ENCODE measurements at regions of chr17 and their contacts with region 1.

Region 1: GRCh38 chr17:27601069-27601975 is 29.7 kb upstream of the LGALS9 start:
- DNase-seq: peak; percentile 77 to 81
- ATAC-seq: peak; percentile 39 to 61; a peak in 4 of 6 replicates
- H3K4me3 ChIP-seq: no peak overlapping the region
- H3K27ac ChIP-seq: peak overlapping the region in 1 of 2 experiments; percentile 8; a peak in 1 of 6 replicates
- H3K4me1 ChIP-seq: peaks cover 25% of the 10 kb centered on the region
- CTCF ChIP-seq: peak; percentile 98
- EP300 ChIP-seq: no peak
- POLR2A ChIP-seq: no peak
- RAD21 ChIP-seq: peak; percentile 95 to 99

Region 2: GRCh38 chr17:27332485-27333409 is 268.6 kb before region 1 on chr17:
- CTCF ChIA-PET with region 1: interaction called, 51 read pairs
- POLR2A ChIA-PET with region 1: no interaction called
- DNase-seq: peak; percentile 97 to 99
- ATAC-seq: peak; percentile 94 to 98
- H3K4me3 ChIP-seq: peak overlapping the region; percentile 47
- H3K27ac ChIP-seq: peak overlapping the region; percentile 87 to 91
- H3K4me1 ChIP-seq: peaks cover 24% of the 10 kb centered on the region
- CTCF ChIP-seq: peak; percentile 96
- EP300 ChIP-seq: peak; percentile 33 to 51; a peak in 3 of 5 replicates
- POLR2A ChIP-seq: peak; percentile 16; the same call in 1 of the 2 replicates
- RAD21 ChIP-seq: peak; percentile 95 to 100

Region 3: GRCh38 chr17:27413792-27414191 is 187.5 kb before region 1 on chr17:
- CTCF ChIA-PET with region 1: interaction called, 12 read pairs
- POLR2A ChIA-PET with region 1: no interaction called
- DNase-seq: no peak
- ATAC-seq: no peak
- H3K4me3 ChIP-seq: no peak overlapping the region
- H3K27ac ChIP-seq: no peak overlapping the region
- H3K4me1 ChIP-seq: peaks cover 22% of the 10 kb centered on the region
- CTCF ChIP-seq: no peak
- EP300 ChIP-seq: no peak
- POLR2A ChIP-seq: no peak
- RAD21 ChIP-seq: no peak

Region 4: GRCh38 chr17:27466743-27467375 is 134.5 kb before region 1 on chr17:
- CTCF ChIA-PET with region 1: interaction called, 141 read pairs
- POLR2A ChIA-PET with region 1: no interaction called
- DNase-seq: no peak
- ATAC-seq: no peak
- H3K4me3 ChIP-seq: no peak overlapping the region
- H3K27ac ChIP-seq: no peak overlapping the region
- H3K4me1 ChIP-seq: peaks cover 44% of the 10 kb centered on the region
- CTCF ChIP-seq: no peak
- EP300 ChIP-seq: no peak
- POLR2A ChIP-seq: no peak
- RAD21 ChIP-seq: no peak

Region 5: GRCh38 chr17:27532269-27533263 is 68.8 kb before region 1 on chr17:
- CTCF ChIA-PET with region 1: interaction called, 140 read pairs
- POLR2A ChIA-PET with region 1: no interaction called
- DNase-seq: no peak
- ATAC-seq: no peak
- H3K4me3 ChIP-seq: no peak overlapping the region
- H3K27ac ChIP-seq: peak overlapping the region; percentile 70 to 84
- H3K4me1 ChIP-seq: peaks cover 95% of the 10 kb centered on the region
- CTCF ChIP-seq: no peak
- EP300 ChIP-seq: no peak
- POLR2A ChIP-seq: no peak
- RAD21 ChIP-seq: no peak

Region 6: DNA sequence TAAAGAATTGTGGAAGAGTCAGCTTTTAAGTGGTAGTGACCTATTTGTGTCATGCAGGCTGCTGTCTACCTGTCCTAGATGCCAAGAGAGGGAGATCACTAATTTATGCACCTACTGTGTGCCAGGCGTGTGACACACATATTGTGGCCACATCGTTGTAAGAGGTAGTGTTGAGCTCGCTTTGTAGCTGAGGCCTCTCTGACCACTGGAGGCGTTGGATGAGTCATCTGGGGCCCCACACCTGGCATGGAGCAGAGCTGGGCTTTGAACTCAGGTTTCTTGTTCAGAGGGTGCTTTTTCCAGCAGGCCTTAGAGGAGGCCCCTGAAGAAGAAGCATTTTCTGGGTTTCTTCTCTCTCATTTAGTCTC is 22.6 kb before region 1 on chr17:
- CTCF ChIA-PET with region 1: interaction called, 523 read pairs
- POLR2A ChIA-PET with region 1: no interaction called
- DNase-seq: no peak
- ATAC-seq: peak; percentile 20 to 28; a peak in 3 of 6 replicates
- H3K4me3 ChIP-seq: no peak overlapping the region
- H3K27ac ChIP-seq: peak overlapping the region; percentile 64 to 87; a peak in 4 of 6 replicates
- H3K4me1 ChIP-seq: peaks cover 61% of the 10 kb centered on the region
- CTCF ChIP-seq: no peak
- EP300 ChIP-seq: no peak
- POLR2A ChIP-seq: no peak
- RAD21 ChIP-seq: no peak

Region 7: DNA sequence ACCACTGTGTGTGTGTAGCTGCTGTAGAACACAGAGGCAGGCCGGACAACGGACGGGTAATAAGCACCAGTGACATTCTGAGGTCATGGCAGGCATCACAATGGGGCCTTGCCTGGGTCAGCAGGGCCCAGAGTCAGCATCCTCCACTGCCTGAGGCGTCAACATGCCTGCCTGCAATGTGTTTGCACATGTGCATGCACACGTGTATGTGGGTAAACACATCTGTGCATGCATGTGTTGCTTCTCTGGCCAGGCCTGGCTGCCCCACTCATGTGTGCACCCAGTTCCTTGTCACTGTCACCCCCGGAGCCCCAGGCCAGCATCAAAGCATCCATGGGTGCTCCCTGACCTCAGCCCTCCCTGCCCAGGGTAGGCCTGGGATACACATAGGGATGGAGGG is 73.0 kb after region 1 on chr17:
- CTCF ChIA-PET with region 1: no interaction called
- POLR2A ChIA-PET with region 1: no interaction called
- DNase-seq: no peak
- ATAC-seq: no peak
- H3K4me3 ChIP-seq: no peak overlapping the region
- H3K27ac ChIP-seq: no peak overlapping the region
- H3K4me1 ChIP-seq: no peaks in the 10 kb centered on the region
- CTCF ChIP-seq: no peak
- EP300 ChIP-seq: no peak
- POLR2A ChIP-seq: no peak
- RAD21 ChIP-seq: no peak